Dendritic cell treated with granulocyte-macrophage colony-stimulating factor and Interleukin-4, amounts not matched to agents 40 ng/mL and 50 ng/mL, for 4 days (primary cell): ENCODE measurements at regions of chr2 and their contacts with region 1.

Region 1: DNA sequence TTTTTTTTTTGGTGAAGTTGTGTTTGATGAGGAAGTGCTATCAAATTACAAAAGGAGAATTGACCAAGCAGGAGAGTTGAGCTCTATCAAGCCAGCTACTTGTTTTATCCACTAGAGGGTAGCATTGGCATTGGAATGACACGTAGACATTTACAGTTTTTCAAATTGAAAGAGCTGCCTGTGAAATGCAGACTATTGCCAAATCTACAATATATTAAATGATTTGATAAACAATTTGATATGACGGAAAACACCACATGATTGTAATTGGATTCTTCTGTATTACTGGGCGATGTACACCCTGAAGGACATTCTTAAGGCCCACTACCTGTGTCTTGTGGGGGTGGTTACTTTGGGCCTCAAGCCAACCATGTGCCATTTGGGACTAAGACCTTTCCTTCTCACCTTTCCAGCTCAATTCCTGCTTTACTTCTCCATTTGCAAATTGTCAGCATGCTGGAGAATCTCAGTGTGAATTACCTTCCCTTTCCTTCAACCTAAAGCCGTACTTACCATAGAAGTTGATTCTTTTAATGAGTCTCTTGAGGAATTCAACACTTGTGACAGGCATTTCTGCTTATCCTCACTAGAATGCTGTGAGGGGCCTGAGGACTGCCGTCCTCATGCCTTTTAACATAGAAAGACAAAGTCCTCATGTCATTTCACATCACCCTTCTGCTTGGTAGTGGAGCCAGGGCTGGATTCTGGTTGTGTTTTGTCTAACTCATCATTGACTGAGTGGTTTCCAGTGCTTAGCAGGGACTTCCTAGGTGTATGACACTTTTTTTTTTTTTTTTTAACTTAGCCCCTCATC is 134.8 kb upstream of the THUMPD2 start:
- H3K4me3 Mint-ChIP-seq: no peak overlapping the region
- H3K27ac Mint-ChIP-seq: no peak overlapping the region
- H3K4me1 Mint-ChIP-seq: peaks cover 12% of the 10 kb centered on the region
- H3K27me3 Mint-ChIP-seq: no peaks in the 10 kb centered on the region

Region 2: GRCh38 chr2:39660612-39661236 is 253.1 kb before region 1 on chr2:
- intact Hi-C with region 1: no loop called
- H3K4me3 Mint-ChIP-seq: no peak overlapping the region
- H3K27ac Mint-ChIP-seq: no peak overlapping the region
- H3K4me1 Mint-ChIP-seq: peaks cover 7% of the 10 kb centered on the region
- H3K27me3 Mint-ChIP-seq: peaks cover 28% of the 10 kb centered on the region

Region 3: GRCh38 chr2:40244675-40245074 is 330.8 kb after region 1 on chr2:
- intact Hi-C with region 1: loop called (anchors 10 kb)
- H3K4me3 Mint-ChIP-seq: no peak overlapping the region
- H3K27ac Mint-ChIP-seq: no peak overlapping the region
- H3K4me1 Mint-ChIP-seq: no peaks in the 10 kb centered on the region
- H3K27me3 Mint-ChIP-seq: no peaks in the 10 kb centered on the region

Region 4: GRCh38 chr2:40448468-40449079 is 534.7 kb after region 1 on chr2:
- intact Hi-C with region 1: loop called (anchors 5 kb)
- H3K4me3 Mint-ChIP-seq: no peak overlapping the region
- H3K27ac Mint-ChIP-seq: no peak overlapping the region
- H3K4me1 Mint-ChIP-seq: peaks cover 74% of the 10 kb centered on the region
- H3K27me3 Mint-ChIP-seq: no peaks in the 10 kb centered on the region

Region 5: GRCh38 chr2:40554668-40555285 is 640.9 kb after region 1 on chr2:
- intact Hi-C with region 1: loop called (anchors 2 kb)
- H3K4me3 Mint-ChIP-seq: no peak overlapping the region
- H3K27ac Mint-ChIP-seq: no peak overlapping the region
- H3K4me1 Mint-ChIP-seq: peaks cover 30% of the 10 kb centered on the region
- H3K27me3 Mint-ChIP-seq: no peaks in the 10 kb centered on the region

Region 6: GRCh38 chr2:40760071-40760666 is 846.3 kb after region 1 on chr2:
- intact Hi-C with region 1: loop called (anchors 2 kb)
- H3K4me3 Mint-ChIP-seq: no peak overlapping the region
- H3K27ac Mint-ChIP-seq: no peak overlapping the region
- H3K4me1 Mint-ChIP-seq: peaks cover 23% of the 10 kb centered on the region
- H3K27me3 Mint-ChIP-seq: no peaks in the 10 kb centered on the region

Region 7: DNA sequence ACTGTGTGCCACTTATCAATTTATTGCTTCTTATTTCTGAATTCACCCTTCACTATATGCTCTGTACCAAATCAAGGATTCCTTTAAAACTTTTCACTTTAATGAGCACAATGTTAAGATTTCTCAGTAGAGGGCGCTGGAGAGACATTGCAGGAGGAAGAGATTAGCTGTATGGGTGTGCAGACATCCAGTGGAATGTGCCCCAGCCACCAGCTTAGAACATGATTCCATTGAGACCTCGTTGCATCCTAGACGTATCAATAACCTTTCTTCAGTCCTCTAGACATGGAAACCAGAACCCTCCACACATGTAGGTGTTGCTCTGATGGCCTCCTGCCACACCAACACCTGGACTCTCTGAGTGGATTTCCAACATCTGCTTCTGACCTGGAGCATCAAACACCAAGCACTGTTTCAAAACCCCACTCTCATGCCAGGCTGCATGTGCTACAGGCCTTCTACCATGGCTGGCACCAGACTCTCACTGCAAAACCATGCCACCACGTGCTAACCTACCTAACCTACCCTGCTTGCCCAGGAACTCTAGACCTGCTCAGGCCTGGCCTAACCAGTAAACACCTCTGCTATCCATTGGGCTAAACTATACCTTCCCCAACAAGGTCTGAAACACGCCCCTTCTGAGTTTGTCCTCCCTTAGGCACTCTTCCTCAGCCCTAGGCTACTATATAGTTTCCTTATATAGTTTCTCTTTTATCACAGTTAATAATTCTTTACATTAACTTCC is 1500.8 kb after region 1 on chr2:
- intact Hi-C with region 1: loop called (anchors 2 kb)
- H3K4me3 Mint-ChIP-seq: no peak overlapping the region
- H3K27ac Mint-ChIP-seq: no peak overlapping the region
- H3K4me1 Mint-ChIP-seq: no peaks in the 10 kb centered on the region
- H3K27me3 Mint-ChIP-seq: no peaks in the 10 kb centered on the region

Region 8: DNA sequence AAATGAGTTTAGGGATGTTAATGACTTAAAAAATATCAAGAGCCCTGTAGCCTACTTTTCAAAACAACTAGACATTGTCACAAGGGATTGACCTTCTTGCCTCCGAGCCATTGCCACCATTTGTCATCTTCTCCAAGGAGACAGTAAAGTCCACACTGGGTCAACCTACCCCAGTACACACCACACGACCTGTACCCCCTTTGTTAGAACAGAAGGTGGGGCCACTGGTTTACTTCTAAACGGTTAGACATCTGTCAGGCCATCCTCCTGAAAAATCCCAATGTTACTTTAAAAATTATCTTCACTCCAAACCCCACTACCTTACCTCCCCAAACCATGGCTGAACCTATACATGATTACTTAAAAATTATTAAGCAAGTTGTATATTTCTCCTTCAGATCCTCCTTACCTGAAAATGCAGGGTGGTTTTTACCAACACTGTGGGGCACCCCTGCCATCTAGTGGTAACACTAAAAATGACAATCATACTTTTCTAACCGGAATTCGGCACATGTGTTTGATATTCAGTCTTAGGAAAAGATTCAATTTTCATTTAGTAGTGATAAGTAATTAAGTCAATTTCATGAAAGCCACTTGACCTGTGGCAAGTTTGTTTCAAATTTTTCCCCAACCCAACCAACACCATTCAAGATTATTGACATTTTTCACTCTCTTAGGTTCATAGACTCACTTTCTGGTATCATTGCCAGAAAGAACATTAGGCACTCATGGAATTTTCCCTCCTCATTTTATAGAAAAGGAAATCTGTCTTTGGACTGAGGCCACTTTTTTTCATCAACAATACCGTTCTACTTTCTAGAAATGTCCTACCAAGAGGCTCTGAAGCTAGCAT is 1868.7 kb after region 1 on chr2:
- intact Hi-C with region 1: loop called (anchors 10 kb)
- H3K4me3 Mint-ChIP-seq: no peak overlapping the region
- H3K27ac Mint-ChIP-seq: no peak overlapping the region
- H3K4me1 Mint-ChIP-seq: no peaks in the 10 kb centered on the region
- H3K27me3 Mint-ChIP-seq: peaks cover 6% of the 10 kb centered on the region